ENCODE measurements at regions of chr2 and their contacts with region 1.

Region 1: DNA sequence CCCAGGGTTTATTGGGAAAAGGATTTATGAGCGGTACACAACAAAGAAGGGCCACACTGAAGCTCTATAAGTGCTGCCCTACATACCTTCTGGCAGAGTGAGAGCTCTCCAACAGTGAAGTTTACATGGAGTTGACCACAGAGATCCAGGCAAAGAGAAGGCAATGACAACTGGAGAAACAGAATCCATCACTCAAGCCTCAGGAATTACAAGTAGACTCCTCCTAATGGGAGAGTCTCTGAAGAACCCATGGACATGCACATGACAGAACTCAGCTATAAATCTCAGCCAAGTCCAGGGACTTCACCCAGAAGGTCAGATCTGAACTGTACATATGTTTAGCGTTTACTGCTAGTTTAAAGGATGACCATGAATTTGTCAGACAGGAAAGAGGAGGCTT is 164.7 kb downstream of the DNAH7 start:
- ATAC-seq: peak in 1 of 8 experiments; percentile 72
- H3K4me3 ChIP-seq: no peak overlapping the region
- H3K27ac ChIP-seq: no peak overlapping the region
- H3K4me1 ChIP-seq: no peaks in the 10 kb centered on the region

Region 2: DNA sequence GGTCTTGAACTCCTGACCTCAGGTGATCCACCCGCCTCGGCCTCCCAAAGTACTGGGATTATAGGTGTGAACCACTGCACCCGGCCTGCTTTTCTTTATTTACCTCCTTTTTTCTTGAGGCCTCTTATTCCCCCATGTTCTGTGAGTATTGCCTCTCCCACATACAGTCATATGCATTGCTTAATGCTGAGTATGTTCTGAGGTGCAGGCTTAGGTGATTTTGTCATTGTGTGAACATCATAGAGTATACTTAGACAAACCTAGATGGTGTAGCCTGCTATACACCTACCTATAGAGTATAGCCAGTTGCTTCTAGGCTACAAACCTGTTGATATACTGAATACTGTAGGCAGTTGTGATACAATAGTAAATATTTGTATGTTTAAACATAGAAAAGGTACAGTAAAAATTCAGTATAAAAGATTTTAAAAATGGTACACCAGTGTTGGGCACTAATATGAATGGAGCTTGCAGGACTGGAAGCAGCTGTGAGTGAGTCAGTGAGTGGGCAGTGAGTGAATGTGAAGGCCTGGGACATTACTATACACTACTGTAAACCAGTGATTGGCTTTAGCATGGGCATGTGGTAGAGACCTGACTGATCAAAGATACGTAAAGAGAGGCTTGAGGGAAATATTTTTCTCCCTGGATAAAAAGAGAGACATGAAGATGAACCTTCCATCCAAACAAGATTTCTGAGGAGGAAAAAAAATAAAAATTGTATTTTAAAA is 229.3 kb before region 1 on chr2:
- in situ Hi-C with region 1: loop called in 1 of 9 experiments (anchors 25 kb)
- ATAC-seq: no peak
- H3K4me3 ChIP-seq: no peak overlapping the region
- H3K27ac ChIP-seq: no peak overlapping the region
- H3K4me1 ChIP-seq: peaks cover 0 to 2% of the 10 kb centered on the region in 2 donors

Region 3: GRCh38 chr2:195756201-195756927 is 147.6 kb before region 1 on chr2:
- in situ Hi-C with region 1: loop called in 1 of 9 experiments (anchors 25 kb)
- ATAC-seq: no peak
- H3K4me3 ChIP-seq: no peak overlapping the region
- H3K27ac ChIP-seq: no peak overlapping the region
- H3K4me1 ChIP-seq: no peaks in the 10 kb centered on the region

Region 4: GRCh38 chr2:196012314-196012713 is 108.4 kb after region 1 on chr2:
- in situ Hi-C with region 1: no loop called
- ATAC-seq: no peak
- H3K4me3 ChIP-seq: no peak overlapping the region
- H3K27ac ChIP-seq: no peak overlapping the region
- H3K4me1 ChIP-seq: peaks cover 2 to 7% of the 10 kb centered on the region in 2 donors